Left ventricle myocardium superior (tissue), 1 donor: ENCODE measurements at regions of chr2 and their contacts with region 1.

Region 1: GRCh38 chr2:102251042-102251848 is 60.1 kb upstream of the IL1RL1 start:
- DNase-seq: peak; percentile 73
- ATAC-seq: peak; percentile 86

Region 2: GRCh38 chr2:102355526-102356380 is 104.5 kb after region 1 on chr2 and contains the start of gene IL18R1:
- intact Hi-C with region 1: loop called (anchors 5 kb)
- DNase-seq: peak; percentile 89
- ATAC-seq: peak; percentile 100
- total RNA-seq, gene IL18R1: 1.3 TPM